AG04450 (cell line): ENCODE measurements at regions of chr12 and their contacts with region 1.

Region 1: GRCh38 chr12:94101738-94102660 is 46.4 kb upstream of the PLXNC1 start:
- DNase-seq: peak; percentile 73
- H3K4me3 ChIP-seq: peak overlapping the region; percentile 66
- H3K27ac ChIP-seq: peak overlapping the region; percentile 39
- H3K27me3 ChIP-seq: peaks cover 3% of the 10 kb centered on the region
- CTCF ChIP-seq: peak; percentile 80

Region 2: DNA sequence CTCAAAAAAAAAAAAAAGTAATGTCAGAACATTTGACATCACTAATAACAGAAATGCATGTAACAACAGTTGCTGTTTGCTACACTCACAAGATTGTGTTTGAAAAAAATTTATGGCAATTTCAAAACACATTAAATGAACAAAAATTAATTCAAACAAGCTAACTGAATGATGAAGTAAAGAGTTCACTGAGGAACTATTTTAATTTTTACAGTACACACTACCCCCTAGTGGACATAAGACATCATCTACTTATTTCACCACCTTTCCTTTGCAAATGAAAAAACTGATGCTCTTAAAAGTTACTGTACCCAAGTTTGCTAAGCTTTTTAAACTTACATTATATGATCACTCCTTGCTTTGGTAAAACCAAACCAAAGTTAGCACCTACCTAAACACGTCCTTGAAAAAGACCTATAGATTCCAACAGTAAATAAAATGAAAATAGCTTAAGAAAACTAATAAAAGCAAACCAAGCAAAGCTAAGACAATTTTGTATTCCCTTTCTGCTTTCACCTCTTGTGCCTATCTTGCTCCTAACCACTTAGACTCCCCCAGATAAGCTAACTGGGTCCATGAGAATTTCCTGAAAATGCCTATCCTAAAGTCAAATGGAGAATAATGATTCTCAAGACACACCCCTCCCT is 682.5 kb before region 1 on chr12:
- CTCF ChIA-PET with region 1: interaction called, 21 read pairs
- POLR2A ChIA-PET with region 1: no interaction called
- DNase-seq: no peak
- H3K4me3 ChIP-seq: no peak overlapping the region
- H3K27ac ChIP-seq: no peak overlapping the region
- H3K27me3 ChIP-seq: no peaks in the 10 kb centered on the region
- CTCF ChIP-seq: peak; percentile 61

Region 3: GRCh38 chr12:93569656-93570551 is 532.1 kb before region 1 on chr12:
- CTCF ChIA-PET with region 1: interaction called, 168 read pairs
- POLR2A ChIA-PET with region 1: interaction called, 7 read pairs
- DNase-seq: peak; percentile 65
- H3K4me3 ChIP-seq: peak overlapping the region; percentile 77
- H3K27ac ChIP-seq: peak overlapping the region; percentile 61
- H3K27me3 ChIP-seq: no peaks in the 10 kb centered on the region
- CTCF ChIP-seq: peak; percentile 90

Region 4: DNA sequence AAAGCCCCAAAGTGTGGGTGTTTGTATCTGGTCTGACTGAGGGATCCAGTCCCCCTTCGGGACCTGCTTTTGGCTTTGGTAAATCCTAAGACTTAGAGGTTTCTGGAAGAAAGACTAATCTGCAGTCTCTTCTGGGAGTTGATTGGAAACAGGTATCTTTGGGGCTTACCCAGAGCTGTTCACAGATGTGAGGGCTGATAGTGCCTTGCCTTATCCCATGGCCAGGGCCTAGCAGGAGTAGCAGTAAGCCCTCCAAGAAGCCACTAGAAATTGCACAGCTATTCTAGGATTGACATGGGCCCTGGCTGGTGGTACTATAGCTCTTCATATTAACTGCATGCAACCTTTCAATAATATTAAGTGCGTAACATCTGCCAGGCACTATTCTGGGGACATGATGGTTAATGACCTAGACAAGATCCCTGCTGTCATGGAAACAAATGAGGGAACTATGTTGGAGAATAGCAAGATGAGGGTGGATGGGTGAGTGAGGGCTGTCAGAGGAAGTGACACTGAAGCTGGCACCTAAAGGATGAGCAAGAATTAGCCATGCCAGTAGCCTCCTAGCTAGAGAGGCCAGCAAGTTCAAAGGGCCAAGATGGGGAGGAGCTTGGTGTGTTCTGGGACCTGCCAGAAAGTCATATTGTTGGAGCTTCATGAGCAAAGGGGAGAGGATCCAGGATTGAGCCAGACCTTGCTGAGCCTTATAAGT is 353.2 kb before region 1 on chr12:
- CTCF ChIA-PET with region 1: interaction called, 13 read pairs
- POLR2A ChIA-PET with region 1: no interaction called
- DNase-seq: no peak
- H3K4me3 ChIP-seq: no peak overlapping the region
- H3K27ac ChIP-seq: no peak overlapping the region
- H3K27me3 ChIP-seq: no peaks in the 10 kb centered on the region
- CTCF ChIP-seq: no peak

Region 5: DNA sequence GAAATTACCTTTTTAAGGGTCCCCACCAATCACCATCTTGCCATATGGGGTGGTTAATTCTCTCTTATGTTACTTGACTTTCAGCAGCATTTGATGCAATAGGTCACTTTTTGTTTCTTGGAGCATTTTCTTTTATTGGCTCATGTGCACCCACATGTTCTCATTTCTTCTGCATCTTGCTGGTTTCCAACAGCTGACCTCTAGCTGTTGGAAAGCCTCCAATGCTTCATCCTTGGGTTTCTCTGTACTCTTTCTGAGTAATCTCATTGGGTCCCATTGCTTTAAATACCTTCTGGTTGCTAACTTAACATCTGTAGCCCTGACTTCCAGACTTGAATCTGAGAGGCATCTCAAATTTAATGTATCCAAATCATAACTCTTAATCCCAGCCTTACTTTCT is 308.0 kb before region 1 on chr12:
- CTCF ChIA-PET with region 1: interaction called, 12 read pairs
- POLR2A ChIA-PET with region 1: no interaction called
- DNase-seq: peak; percentile 66
- H3K4me3 ChIP-seq: no peak overlapping the region
- H3K27ac ChIP-seq: no peak overlapping the region
- H3K27me3 ChIP-seq: no peaks in the 10 kb centered on the region
- CTCF ChIP-seq: no peak

Region 6: DNA sequence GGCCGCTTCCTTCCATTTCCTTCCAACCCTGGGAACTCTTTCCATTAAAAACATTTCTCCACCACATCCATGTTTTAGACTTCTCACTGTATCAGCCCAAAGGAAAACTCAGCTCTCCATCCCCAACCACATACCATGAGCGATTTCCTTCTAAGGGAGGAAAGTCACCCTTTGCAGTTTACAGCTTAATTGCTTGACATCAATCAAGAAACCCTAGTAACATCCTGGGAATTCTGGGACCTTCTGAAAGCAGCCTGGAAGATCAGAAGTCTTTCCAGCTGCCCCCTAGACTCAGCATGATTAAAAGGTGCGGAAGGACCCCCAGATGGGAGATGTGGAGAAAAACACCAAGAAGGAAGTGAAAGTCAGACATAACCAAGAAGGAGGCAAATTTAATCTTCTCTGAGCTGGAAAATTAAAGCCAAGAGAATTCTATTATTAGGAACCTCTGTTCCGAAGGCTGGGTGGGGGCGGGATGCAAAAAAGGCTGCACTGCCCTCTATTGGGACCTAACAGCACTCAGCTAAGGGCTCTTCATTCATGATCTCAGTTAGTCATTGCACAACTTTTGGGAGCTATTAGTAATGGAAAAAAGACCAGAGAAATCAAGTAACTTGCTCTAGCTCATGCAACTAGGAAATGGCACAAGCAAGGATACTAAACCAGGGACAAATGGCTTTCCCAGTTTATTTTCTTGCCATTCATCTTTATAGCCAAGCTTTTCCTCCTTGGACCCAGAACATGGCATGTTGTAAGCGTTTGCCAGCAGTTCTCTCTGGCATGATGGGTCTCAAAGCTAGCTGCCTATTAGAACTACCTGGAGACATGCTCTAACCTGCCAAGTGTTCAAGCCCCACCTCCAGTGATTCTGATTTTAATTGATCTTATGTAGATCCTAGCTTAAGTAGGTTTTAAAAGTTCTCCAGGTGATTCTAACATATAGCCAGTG is 26.7 kb before region 1 on chr12:
- CTCF ChIA-PET with region 1: interaction called, 48 read pairs
- POLR2A ChIA-PET with region 1: no interaction called
- DNase-seq: peak; percentile 71
- H3K4me3 ChIP-seq: no peak overlapping the region
- H3K27ac ChIP-seq: no peak overlapping the region
- H3K27me3 ChIP-seq: peaks cover 3% of the 10 kb centered on the region
- CTCF ChIP-seq: peak; percentile 80